T-cell (primary cell): ENCODE measurements at regions of chr2 and their contacts with region 1.

Region 1: GRCh38 chr2:45578056-45578809 is 32.8 kb downstream of the SRBD1 start:
- DNase-seq: peak in 22 of 35 experiments; percentile 2 to 59 (median 10)
- ATAC-seq: peak; percentile 58 to 87 (median 73)
- H3K4me3 ChIP-seq: no peak overlapping the region
- H3K4me3 Mint-ChIP-seq: no peak overlapping the region
- H3K27ac ChIP-seq: no peak overlapping the region
- H3K27ac Mint-ChIP-seq: no peak overlapping the region
- H3K4me1 ChIP-seq: no peaks in the 10 kb centered on the region
- H3K4me1 Mint-ChIP-seq: peaks cover 0 to 1% (median 0%) of the 10 kb centered on the region in 3 donors
- H3K27me3 ChIP-seq: no peaks in the 10 kb centered on the region
- H3K27me3 Mint-ChIP-seq: no peaks in the 10 kb centered on the region

Region 2: GRCh38 chr2:44981136-44982108 is 596.8 kb before region 1 on chr2:
- CTCF ChIA-PET with region 1: interaction called, 5 to 10 read pairs
- POLR2A ChIA-PET with region 1: no interaction called
- DNase-seq: peak in 34 of 35 experiments; percentile 18 to 81 (median 46)
- ATAC-seq: peak in 2 of 4 experiments; percentile 29 to 53
- H3K4me3 ChIP-seq: no peak overlapping the region
- H3K4me3 Mint-ChIP-seq: no peak overlapping the region
- H3K27ac ChIP-seq: no peak overlapping the region
- H3K27ac Mint-ChIP-seq: no peak overlapping the region
- H3K4me1 ChIP-seq: no peaks in the 10 kb centered on the region
- H3K4me1 Mint-ChIP-seq: peaks cover 2 to 6% (median 4%) of the 10 kb centered on the region in 3 donors
- H3K27me3 ChIP-seq: peaks cover 0 to 24% of the 10 kb centered on the region in 2 experiments
- H3K27me3 Mint-ChIP-seq: peaks cover 33 to 35% of the 10 kb centered on the region in 2 donors

Region 3: DNA sequence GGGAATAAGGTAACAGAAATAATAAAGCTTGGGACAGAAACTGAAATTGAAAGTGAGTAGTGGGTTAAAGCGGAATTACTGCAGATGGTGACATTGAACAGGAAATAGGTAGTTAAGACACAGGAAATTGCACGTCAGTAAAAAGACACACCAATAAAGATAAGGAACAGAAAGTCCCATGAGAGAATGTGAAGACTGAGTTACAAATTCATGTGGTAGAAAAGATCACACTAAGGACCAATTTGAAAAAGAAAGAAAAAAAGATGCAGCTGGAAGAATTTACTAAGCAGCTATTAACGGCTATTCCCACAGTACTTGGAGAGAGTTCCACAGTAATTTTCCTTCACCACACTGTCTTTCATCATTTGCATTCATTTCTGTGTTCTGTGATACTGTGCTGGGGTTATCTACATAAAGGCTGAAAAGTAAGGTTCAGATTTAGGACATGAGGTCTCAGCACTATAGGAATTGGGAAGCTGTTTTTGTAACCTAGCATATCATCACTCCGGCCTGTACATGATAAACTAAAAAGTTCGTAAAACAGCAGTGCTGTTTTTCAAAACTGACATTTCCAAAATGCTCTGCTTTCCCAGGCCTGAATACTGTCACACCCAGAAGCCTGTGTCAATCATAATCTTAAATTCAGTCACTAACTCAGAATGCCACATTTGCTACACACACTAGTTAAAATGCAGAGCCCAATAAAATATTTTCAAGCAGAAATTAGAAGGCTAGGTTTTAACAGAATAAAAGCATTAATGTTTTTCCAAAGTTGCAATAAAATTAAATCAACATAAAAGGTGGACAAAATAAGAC is 10.1 kb before region 1 on chr2:
- CTCF ChIA-PET with region 1: interaction called, 4 to 18 read pairs
- POLR2A ChIA-PET with region 1: no interaction called
- DNase-seq: peak in 4 of 35 experiments; percentile 16 to 86 (median 24)
- ATAC-seq: peak; percentile 93 to 100 (median 98)
- H3K4me3 ChIP-seq: peak overlapping the region; percentile 31 to 38
- H3K4me3 Mint-ChIP-seq: peak overlapping the region; percentile 55 to 86 (median 83)
- H3K27ac ChIP-seq: peak overlapping the region; percentile 87
- H3K27ac Mint-ChIP-seq: peak overlapping the region; percentile 91 to 92
- H3K4me1 ChIP-seq: peaks cover 11 to 14% of the 10 kb centered on the region in 2 experiments
- H3K4me1 Mint-ChIP-seq: peaks cover 35 to 45% (median 42%) of the 10 kb centered on the region in 3 donors
- H3K27me3 ChIP-seq: no peaks in the 10 kb centered on the region
- H3K27me3 Mint-ChIP-seq: no peaks in the 10 kb centered on the region

Region 4: DNA sequence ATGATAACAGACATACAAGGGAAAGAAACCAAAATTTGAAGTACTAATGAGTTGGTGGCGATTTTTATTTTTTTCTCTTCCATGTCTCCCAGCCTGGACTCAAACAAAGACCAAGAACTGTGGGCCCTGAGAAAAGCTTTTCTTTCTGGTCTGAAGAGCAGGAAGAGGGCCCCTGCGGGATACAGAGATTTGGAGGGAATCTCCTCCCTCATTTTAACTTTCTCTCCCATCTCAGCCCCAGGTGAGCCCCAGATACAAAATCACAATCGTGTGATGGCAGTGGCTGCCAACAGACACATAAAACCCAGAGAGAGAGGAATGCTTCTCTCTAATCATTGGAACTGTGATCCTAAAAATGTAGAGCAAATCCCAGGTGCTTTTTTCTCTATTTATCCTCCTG is 53.7 kb after region 1 on chr2:
- CTCF ChIA-PET with region 1: no interaction called
- POLR2A ChIA-PET with region 1: no interaction called
- DNase-seq: no peak
- ATAC-seq: no peak
- H3K4me3 ChIP-seq: no peak overlapping the region
- H3K4me3 Mint-ChIP-seq: no peak overlapping the region
- H3K27ac ChIP-seq: no peak overlapping the region
- H3K27ac Mint-ChIP-seq: no peak overlapping the region
- H3K4me1 ChIP-seq: no peaks in the 10 kb centered on the region
- H3K4me1 Mint-ChIP-seq: no peaks in the 10 kb centered on the region
- H3K27me3 ChIP-seq: peaks cover 0 to 12% of the 10 kb centered on the region in 2 experiments
- H3K27me3 Mint-ChIP-seq: peaks cover 17 to 30% of the 10 kb centered on the region in 2 donors

Region 5: DNA sequence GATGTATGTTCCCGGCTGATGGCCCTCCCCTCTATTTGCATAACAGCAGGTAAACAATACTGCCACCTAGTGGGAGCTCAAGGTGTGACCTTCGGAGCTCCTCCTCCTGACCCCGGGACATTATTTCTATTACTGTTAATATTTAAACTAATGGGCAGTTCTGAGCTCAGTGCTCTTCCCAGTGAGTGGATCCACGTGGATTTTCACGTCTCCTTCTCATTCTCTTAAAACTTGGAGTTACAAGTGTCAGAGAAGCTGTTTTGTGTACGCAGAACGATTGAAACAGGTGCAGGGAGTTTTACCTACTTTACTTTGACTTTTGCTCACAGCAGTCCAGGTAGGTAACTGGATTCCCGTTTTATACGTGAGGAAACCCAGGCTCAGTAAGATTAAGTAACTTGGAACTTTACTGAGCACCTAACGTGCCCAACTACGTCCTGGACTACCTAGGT is 200.5 kb after region 1 on chr2:
- CTCF ChIA-PET with region 1: interaction called, 3 to 10 read pairs
- POLR2A ChIA-PET with region 1: no interaction called
- DNase-seq: peak; percentile 19 to 88 (median 61)
- ATAC-seq: peak; percentile 79 to 91 (median 84)
- H3K4me3 ChIP-seq: no peak overlapping the region
- H3K4me3 Mint-ChIP-seq: peak overlapping the region in 1 of 3 donors; percentile 46
- H3K27ac ChIP-seq: no peak overlapping the region
- H3K27ac Mint-ChIP-seq: no peak overlapping the region
- H3K4me1 ChIP-seq: no peaks in the 10 kb centered on the region
- H3K4me1 Mint-ChIP-seq: peaks cover 6 to 11% (median 7%) of the 10 kb centered on the region in 3 donors
- H3K27me3 ChIP-seq: no peaks in the 10 kb centered on the region
- H3K27me3 Mint-ChIP-seq: no peaks in the 10 kb centered on the region